Activated CD4-positive, alpha-beta memory T cell treated with anti-CD3 and anti-CD28 coated beads for 36 hours (primary cell): ENCODE measurements at regions of chr2 and their contacts with region 1.

Region 1: GRCh38 chr2:222690564-222691200 is 19.2 kb downstream of the MOGAT1 start:
- DNase-seq: peak; percentile 82
- H3K4me3 Mint-ChIP-seq: no peak overlapping the region
- H3K27ac Mint-ChIP-seq: no peak overlapping the region
- H3K4me1 Mint-ChIP-seq: peaks cover 14% of the 10 kb centered on the region
- H3K27me3 Mint-ChIP-seq: no peaks in the 10 kb centered on the region

Region 2: GRCh38 chr2:222677981-222678380 is 12.7 kb before region 1 on chr2:
- CTCF ChIA-PET with region 1: interaction called, 11 read pairs
- POLR2A ChIA-PET with region 1: no interaction called
- intact Hi-C with region 1: no loop called
- DNase-seq: no peak
- H3K4me3 Mint-ChIP-seq: no peak overlapping the region
- H3K27ac Mint-ChIP-seq: no peak overlapping the region
- H3K4me1 Mint-ChIP-seq: no peaks in the 10 kb centered on the region
- H3K27me3 Mint-ChIP-seq: peaks cover 39% of the 10 kb centered on the region

Region 3: GRCh38 chr2:222753251-222753824 is 62.7 kb after region 1 on chr2:
- CTCF ChIA-PET with region 1: no interaction called
- POLR2A ChIA-PET with region 1: no interaction called
- intact Hi-C with region 1: no loop called
- DNase-seq: no peak
- H3K4me3 Mint-ChIP-seq: no peak overlapping the region
- H3K27ac Mint-ChIP-seq: no peak overlapping the region
- H3K4me1 Mint-ChIP-seq: no peaks in the 10 kb centered on the region
- H3K27me3 Mint-ChIP-seq: peaks cover 2% of the 10 kb centered on the region

Region 4: GRCh38 chr2:222792001-222792611 is 101.4 kb after region 1 on chr2:
- CTCF ChIA-PET with region 1: interaction called, 3 read pairs
- POLR2A ChIA-PET with region 1: no interaction called
- intact Hi-C with region 1: loop called (anchors 5 kb)
- DNase-seq: no peak
- H3K4me3 Mint-ChIP-seq: no peak overlapping the region
- H3K27ac Mint-ChIP-seq: no peak overlapping the region
- H3K4me1 Mint-ChIP-seq: peaks cover 12% of the 10 kb centered on the region
- H3K27me3 Mint-ChIP-seq: no peaks in the 10 kb centered on the region

Region 5: DNA sequence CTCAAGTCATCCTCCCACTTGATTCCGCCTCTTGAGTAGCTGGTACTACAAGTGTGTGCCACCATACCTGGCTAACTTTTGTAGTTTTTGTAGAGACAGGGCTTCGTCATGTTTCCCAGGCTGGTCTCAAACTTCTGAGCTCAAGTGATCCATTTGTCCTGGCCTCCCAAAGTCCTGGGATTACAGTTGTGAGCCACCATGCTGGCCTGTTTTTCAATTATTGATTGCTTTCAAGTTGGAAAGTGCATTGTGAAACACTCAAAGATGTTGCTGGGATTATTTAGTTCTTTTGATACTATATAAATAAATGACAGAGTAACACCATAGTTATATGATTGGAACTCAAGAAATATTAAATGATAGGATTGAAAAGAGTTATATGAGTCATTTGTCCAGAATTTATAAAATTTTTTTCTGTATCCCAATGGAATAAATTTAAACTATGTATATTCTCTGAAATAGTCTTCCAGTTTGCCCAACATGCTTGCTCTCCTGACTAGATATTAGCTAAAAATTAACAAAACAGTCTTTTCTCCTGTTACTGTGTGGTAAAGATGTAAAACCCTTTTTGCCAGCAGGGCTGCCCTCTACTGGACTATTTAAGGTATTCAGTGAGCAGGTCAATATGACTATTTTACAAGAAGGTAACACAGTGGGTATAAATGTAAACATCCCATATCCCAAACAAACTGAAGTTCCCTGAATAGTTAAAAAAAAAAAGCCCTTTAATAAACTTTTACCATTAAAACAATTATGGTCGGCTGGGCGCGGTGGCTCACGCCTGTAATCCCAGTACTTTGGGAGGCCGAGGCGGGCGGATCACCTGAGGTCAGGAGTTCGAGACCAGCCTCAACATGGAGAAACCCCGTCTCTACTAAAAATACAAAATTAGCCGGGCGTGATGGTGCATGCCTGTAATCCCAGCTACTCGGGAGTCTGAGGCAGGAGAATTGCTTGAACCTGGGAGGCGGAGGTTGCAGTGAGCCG is 212.8 kb after region 1 on chr2:
- CTCF ChIA-PET with region 1: interaction called, 8 read pairs
- POLR2A ChIA-PET with region 1: no interaction called
- intact Hi-C with region 1: loop called (anchors 1 kb)
- DNase-seq: peak; percentile 34
- H3K4me3 Mint-ChIP-seq: no peak overlapping the region
- H3K27ac Mint-ChIP-seq: no peak overlapping the region
- H3K4me1 Mint-ChIP-seq: peaks cover 13% of the 10 kb centered on the region
- H3K27me3 Mint-ChIP-seq: no peaks in the 10 kb centered on the region

Region 6: DNA sequence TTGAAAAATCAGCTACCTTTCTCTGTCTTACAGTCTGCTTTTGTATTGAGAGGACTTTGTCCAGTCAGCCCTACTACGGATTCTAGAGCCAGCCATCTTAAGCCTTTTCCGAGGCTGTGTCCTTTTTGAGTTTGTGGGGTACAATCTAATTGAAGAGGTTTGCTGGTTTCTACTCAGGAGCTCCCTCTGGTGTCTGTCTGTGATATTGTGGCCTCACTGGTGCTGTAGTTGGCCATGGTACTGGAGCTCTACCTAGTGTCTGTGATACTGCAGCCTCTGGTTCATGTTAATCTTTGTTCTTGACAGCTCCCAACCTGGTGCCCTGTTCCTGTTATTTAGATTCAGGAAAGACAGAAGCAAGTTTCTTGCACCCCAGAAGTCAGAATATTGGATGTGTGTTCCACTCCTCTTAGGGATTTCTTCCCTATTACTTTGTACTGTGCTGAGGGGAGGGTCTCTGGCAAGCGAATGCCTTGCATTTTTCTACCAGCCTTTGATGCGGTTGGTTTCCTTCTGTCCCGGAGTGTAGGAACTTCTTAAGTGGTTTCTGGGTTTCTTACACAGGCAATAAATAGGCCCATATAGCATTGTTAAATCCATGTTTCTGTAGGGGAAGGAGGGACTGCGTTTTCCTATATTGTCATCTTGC is 248.7 kb after region 1 on chr2:
- CTCF ChIA-PET with region 1: interaction called, 19 read pairs
- POLR2A ChIA-PET with region 1: no interaction called
- intact Hi-C with region 1: loop called (anchors 1 kb)
- DNase-seq: peak; percentile 74
- H3K4me3 Mint-ChIP-seq: no peak overlapping the region
- H3K27ac Mint-ChIP-seq: no peak overlapping the region
- H3K4me1 Mint-ChIP-seq: peaks cover 11% of the 10 kb centered on the region
- H3K27me3 Mint-ChIP-seq: no peaks in the 10 kb centered on the region